Activated naive CD4-positive, alpha-beta T cell treated with anti-CD3 and anti-CD28 coated beads for 36 hours (primary cell): ENCODE measurements at regions of chr10 and their contacts with region 1.

Region 1: DNA sequence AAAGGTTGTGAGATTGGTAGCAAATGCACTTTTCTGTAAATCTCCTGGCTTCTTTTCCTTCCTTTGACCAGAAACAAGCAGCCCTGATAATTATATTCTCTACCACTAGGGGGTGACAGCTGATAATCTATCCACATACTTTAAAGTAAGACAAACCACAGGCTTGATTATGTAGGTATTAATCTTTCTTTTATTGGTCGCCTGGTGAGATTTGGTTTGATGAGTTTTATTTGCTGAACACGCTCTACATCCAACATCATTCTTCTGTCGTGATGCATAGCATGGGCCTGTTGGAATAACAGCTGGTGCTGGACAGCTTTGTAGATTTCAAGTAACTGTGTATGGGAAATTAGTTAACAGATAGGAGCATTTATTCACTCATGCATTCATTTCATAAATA is 63.5 kb downstream of the ZNF365 start:
- DNase-seq: no peak
- H3K4me3 Mint-ChIP-seq: no peak overlapping the region
- H3K27ac Mint-ChIP-seq: no peak overlapping the region
- H3K4me1 Mint-ChIP-seq: peaks cover 19% of the 10 kb centered on the region
- H3K27me3 Mint-ChIP-seq: peaks cover 10% of the 10 kb centered on the region

Region 2: GRCh38 chr10:62449755-62450154 is 12.1 kb after region 1 on chr10:
- CTCF ChIA-PET with region 1: interaction called, 23 read pairs
- intact Hi-C with region 1: loop called (anchors 1 kb)
- DNase-seq: no peak
- H3K4me3 Mint-ChIP-seq: no peak overlapping the region
- H3K27ac Mint-ChIP-seq: no peak overlapping the region
- H3K4me1 Mint-ChIP-seq: no peaks in the 10 kb centered on the region
- H3K27me3 Mint-ChIP-seq: no peaks in the 10 kb centered on the region

Region 3: DNA sequence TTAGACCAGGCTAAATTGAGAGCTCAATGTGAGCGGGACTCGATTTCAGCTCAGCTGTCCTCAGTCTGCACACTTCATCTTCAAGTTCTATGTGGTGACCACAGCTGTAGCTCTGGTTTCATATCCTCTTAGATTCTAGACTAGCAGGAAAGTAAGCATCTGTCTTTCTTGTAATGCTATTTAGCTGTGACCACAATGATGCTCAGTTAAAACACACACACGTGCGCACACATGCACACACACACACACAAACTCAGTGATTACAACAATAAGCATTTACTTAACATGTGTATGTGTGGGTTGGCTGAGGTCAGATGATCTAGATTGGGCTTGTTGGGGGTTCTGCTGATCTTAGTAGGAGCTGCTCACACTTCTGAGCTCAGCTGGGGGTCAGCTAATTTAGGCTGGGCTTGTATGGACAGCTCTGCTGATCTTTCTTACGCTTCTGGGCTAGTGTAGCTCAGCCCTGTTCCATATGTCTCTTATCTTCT is 19.0 kb after region 1 on chr10:
- CTCF ChIA-PET with region 1: interaction called, 6 read pairs
- intact Hi-C with region 1: loop called (anchors 1 kb)
- DNase-seq: no peak
- H3K4me3 Mint-ChIP-seq: no peak overlapping the region
- H3K27ac Mint-ChIP-seq: no peak overlapping the region
- H3K4me1 Mint-ChIP-seq: no peaks in the 10 kb centered on the region
- H3K27me3 Mint-ChIP-seq: no peaks in the 10 kb centered on the region